ENCODE measurements at regions of chr9 and their contacts with region 1.

Region 1: GRCh38 chr9:24464319-24464951 is 81.3 kb downstream of the IZUMO3 start:
- DNase-seq: no peak
- ATAC-seq: no peak
- H3K4me3 ChIP-seq: no peak overlapping the region
- H3K27ac ChIP-seq: no peak overlapping the region
- H3K4me1 ChIP-seq: no peaks in the 10 kb centered on the region
- H3K27me3 ChIP-seq: no peaks in the 10 kb centered on the region
- CTCF ChIP-seq: no peak

Region 2: DNA sequence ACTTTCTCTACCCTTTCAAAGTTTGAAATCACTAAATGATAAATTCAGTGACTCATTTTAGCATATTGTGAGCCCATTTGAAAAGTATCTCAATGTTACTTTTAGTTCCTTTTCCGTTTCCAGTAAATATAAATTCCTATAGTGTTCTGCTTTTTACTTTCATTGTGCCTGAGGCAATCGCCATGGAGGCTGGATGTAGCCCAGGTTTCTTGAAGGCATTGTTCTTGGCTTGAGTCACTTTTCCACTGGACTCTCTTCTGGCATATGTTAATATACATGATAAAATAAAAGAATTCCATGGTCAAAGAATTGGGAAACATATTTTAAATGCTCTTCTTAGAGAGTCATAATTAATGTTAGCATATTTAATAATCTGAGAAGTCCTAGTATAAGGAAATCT is 245.8 kb before region 1 on chr9:
- intact Hi-C with region 1: no loop called
- DNase-seq: no peak
- ATAC-seq: no peak
- H3K4me3 ChIP-seq: no peak overlapping the region
- H3K27ac ChIP-seq: no peak overlapping the region
- H3K4me1 ChIP-seq: no peaks in the 10 kb centered on the region
- H3K27me3 ChIP-seq: no peaks in the 10 kb centered on the region
- CTCF ChIP-seq: no peak

Region 3: DNA sequence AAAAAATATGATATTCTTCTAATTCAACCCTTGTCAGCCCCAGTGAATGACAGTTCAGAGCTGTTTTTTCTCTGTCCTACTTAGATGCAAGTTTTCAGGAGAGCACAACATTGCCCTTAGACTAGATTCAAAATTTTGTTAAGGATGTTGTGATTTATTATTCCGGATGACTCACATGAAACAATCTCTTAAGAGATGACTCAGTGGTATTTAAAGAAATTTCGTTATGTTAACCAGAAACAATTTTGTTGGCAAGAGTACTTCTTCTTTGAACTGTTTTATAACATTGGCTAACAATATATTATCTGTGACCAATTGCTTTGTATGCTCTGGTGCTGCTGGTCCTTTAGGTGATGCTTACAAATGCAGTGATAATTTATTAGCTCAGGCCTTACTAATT is 50.8 kb before region 1 on chr9:
- intact Hi-C with region 1: loop called (anchors 10 kb)
- DNase-seq: no peak
- ATAC-seq: no peak
- H3K4me3 ChIP-seq: no peak overlapping the region
- H3K27ac ChIP-seq: no peak overlapping the region
- H3K4me1 ChIP-seq: no peaks in the 10 kb centered on the region
- H3K27me3 ChIP-seq: no peaks in the 10 kb centered on the region
- CTCF ChIP-seq: no peak